Posterior cingulate gyrus (tissue), 11 donors: ENCODE measurements at regions of chr15 and their contacts with region 1.

Region 1: GRCh38 chr15:66287461-66288057 is 5.8 kb upstream of the DIS3L start:
- DNase-seq: no peak

Region 2: DNA sequence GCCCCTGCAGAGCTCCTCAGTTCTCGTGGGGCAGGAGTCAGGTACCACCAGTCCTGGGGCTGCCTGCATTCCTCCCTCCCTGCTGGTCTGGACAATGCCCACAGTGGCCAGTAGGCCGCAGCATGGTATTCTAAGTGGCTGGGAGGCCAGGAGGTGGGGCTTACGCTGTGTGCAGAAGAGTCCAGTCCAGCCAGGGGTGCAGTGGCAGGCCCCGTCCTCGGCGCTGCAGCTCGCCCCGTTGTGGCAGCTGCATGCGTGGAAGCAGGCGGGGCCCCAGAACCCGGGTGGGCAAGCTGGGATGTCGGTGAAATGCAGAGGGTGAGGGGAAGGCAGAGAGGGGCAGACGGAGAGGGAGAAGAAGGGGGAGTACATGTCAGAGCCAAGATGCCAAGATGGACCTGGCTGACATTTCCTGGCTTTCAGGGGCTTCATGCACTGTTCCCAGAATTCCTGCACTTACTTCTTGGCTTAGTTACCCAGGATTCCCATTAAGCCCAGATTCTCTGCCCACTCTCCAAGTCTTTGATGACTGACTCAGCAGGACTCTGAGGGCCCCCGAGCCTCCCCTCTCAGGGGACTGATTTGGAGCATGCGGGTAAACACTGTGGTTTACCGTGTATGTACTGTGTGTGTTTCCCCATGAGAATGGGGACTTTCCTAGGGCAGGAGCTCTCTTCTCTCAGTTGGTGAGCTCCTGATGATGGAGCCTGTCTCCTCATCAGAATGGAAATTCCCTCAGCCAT is 370.7 kb before region 1 on chr15:
- intact Hi-C with region 1: loop called (anchors 5 kb)
- DNase-seq: peak; percentile 43 to 96 (median 76)

Region 3: DNA sequence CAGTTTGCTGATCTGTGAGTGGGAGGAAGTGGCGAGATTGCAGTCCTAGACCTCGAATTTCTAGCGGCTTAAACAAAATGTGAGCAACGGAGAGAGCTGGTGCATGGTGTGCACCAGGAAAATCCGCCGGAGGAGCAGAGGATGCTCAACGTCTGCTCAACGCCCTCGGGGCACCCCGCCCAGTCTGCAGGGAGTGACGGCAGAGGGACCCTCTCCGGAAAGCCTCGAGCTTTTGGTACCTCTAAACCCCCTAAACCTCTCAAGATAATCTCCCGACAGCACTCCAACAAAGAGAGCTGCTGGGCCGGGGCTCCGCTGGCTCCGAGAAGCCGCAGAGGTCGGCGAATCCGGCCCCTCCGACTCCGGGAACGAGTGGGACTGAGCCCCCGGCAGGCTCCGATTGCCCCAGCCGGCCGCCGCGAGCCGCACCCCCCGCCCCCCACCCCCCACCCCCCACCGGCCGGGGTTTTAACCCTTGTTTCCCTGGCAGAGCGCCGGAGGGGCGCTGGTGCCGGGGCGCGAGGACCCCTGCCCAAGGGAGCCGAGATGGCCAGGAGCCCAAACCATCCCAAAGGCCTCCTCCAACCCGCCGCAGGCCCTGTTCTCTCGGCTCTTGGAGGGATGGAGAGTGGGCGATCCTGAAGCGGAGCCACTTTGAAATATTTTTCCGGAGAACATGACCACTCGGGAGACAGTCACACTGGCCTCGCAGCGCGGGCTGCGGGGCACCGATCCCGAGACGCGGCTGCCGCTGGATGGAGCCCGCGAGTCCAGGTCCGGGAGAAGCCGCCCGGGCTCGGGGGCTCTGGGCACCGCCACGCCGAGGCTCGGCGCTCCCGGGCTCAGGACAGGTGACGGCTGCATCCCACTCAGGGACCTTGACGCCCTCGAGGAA is 35.5 kb before region 1 on chr15:
- intact Hi-C with region 1: loop called (anchors 2 kb)
- DNase-seq: peak; percentile 34 to 94 (median 64)